Posterior cingulate gyrus (tissue), 11 donors: ENCODE measurements at regions of chr14 and their contacts with region 1.

Region 1: GRCh38 chr14:54691525-54692283 is 124.8 kb downstream of the SAMD4A start:
- DNase-seq: peak; percentile 53 to 95 (median 69)

Region 2: GRCh38 chr14:54579621-54580020 is 112.1 kb before region 1 on chr14:
- intact Hi-C with region 1: no loop called
- DNase-seq: no peak

Region 3: DNA sequence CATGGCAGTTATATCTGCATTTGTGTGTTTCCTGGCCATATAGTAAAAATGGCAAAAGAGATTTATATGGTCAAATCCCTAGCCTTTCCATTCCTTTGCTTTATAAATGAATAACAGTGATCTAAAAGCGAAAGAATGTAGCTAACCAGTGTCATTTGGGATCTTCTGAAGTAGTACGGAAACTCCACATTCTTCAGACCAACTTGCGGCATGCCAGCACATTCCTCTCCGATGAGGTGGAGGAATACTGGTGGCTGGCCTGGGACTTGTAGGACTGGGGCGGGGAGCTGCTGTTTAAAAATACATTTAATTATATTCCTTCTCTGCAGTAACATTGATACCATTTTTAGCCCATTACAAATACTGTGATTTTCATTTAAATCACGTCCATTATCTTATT is 39.5 kb before region 1 on chr14:
- intact Hi-C with region 1: no loop called
- DNase-seq: peak in 1 of 10 donors; percentile 33

Region 4: GRCh38 chr14:54773171-54773975 is 81.7 kb after region 1 on chr14:
- intact Hi-C with region 1: loop called (anchors 5 kb)
- DNase-seq: peak in 6 of 10 donors; percentile 37 to 91 (median 58)

Region 5: DNA sequence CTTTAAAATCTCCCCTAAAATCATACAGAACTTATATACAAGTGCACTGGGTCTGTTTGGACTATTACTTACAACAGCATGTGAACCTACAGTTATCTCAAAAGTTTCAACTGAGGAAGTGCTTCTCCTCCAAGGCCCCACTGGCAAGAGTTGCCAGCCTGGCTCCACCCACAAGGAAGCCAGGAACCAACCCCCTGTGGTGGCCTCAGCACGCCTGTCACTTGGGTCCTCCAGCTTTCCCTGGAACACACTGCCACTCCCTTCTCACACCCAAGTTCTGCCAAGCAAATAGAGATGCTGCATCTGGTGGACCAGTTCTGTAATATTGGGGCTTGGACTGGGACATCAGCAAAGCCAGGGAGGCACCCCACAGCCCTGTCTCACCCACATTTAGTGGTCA is 95.6 kb after region 1 on chr14:
- intact Hi-C with region 1: no loop called
- DNase-seq: no peak